Astrocyte of the cerebellum (primary cell): ENCODE measurements at regions of chr20 and their contacts with region 1.

Region 1: GRCh38 chr20:2544211-2544610 is 7.8 kb downstream of the TMC2 start:
- DNase-seq: no peak
- H3K4me3 ChIP-seq: no peak overlapping the region
- CTCF ChIP-seq: no peak

Region 2: DNA sequence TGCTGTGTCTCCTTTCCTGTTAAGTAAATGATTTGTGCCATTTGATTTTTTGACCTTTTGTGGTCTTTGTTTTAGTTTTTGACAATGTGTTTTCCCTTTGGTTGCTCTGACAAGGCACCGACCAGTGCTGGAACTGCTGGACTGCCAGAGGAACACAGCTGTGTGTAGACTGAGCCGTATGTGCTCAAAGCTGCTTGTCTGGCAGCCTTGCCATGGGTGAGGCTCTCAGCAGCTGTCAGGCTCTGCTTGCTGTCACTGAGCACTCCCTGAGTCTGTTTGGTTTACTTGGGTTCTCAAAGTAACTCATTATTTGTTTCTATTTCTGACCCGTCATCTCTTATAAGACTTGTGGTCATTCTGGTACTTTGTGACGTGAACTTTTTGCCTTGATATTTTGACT is 58.5 kb before region 1 on chr20:
- in situ Hi-C with region 1: no loop called
- DNase-seq: no peak
- H3K4me3 ChIP-seq: no peak overlapping the region
- CTCF ChIP-seq: no peak

Region 3: DNA sequence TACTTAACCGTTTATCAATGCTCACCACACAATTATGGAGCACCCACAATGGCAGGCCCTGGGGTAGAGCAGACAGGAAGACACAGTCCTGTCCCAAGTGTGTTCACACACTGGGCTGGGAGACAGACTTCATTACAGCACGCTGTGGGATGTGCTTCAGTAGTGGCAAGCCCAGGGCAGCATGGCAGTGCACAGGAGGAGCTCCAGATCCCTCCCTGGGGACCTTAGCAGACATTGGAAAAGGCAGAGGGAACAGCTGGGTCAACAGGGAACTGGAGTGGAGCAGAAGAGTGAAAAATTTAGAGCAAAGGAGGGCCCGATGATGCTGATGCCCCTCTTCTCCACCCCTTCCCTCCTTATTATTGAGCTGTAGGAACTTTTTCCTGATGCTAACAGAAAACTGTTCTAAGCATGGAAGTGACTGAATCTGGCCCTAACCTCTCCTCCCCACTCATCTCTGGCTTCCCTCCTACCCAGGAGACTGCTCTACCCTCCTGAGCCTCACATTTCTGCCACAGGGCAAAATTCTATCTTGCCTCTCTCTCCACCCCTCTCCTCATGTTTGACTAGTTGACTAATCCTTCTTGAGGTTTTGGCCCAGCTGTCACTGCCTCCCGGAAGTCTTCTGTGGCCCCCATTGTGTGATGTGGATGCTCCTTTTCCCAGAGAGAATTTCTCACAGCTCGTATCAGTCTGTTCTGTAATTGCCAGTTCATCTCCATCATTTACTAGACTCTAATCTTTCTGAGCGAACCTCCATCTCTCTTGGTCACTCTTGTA is 66.9 kb after region 1 on chr20:
- in situ Hi-C with region 1: no loop called
- DNase-seq: no peak
- H3K4me3 ChIP-seq: no peak overlapping the region
- CTCF ChIP-seq: no peak

Region 4: DNA sequence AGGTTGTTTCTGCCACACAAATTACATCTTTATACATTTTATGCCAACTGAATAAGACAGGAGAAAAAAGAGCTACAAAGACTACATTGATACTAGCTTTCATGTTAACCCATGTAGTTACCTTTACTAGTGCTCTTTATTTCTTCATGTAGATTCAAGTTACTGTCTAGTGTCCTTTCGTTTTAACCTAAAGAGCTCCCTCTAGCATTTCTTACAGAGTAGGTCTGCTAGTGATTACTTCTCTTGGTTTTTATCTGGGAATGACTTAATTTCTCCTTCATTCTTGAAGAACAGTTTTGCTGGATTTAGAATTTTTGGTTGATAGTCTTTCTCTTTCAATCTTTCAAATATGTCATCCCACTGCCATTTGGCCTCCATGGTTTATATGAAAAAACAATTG is 87.0 kb after region 1 on chr20:
- in situ Hi-C with region 1: loop called (anchors 10 kb)
- DNase-seq: no peak
- H3K4me3 ChIP-seq: no peak overlapping the region
- CTCF ChIP-seq: no peak